GM12878 (cell line): ENCODE measurements at regions of chr16 and their contacts with region 1.

Region 1: GRCh38 chr16:68590201-68590994 is 51.3 kb downstream of the ZFP90 start:
- DNase-seq: no peak
- ATAC-seq: peak; percentile 90
- H3K4me3 ChIP-seq: no peak overlapping the region
- H3K27ac ChIP-seq: no peak overlapping the region
- H3K4me1 ChIP-seq: no peaks in the 10 kb centered on the region
- H3K27me3 ChIP-seq: no peaks in the 10 kb centered on the region
- CTCF ChIP-seq: peak; percentile 34 to 71 (median 65); a peak in 5 of 6 replicates
- EP300 ChIP-seq: no peak
- POLR2A ChIP-seq: no peak
- RAD21 ChIP-seq: peak; percentile 72

Region 2: GRCh38 chr16:68520649-68521086 is 69.7 kb before region 1 on chr16:
- CTCF ChIA-PET with region 1: interaction called, 11 read pairs
- POLR2A ChIA-PET with region 1: no interaction called
- RAD21 ChIA-PET with region 1: interaction called, 4 read pairs
- SMC1A ChIA-PET with region 1: no interaction called
- in situ Hi-C with region 1: no loop called
- intact Hi-C with region 1: no loop called
- DNase-seq: no peak
- ATAC-seq: peak; percentile 98
- H3K4me3 ChIP-seq: no peak overlapping the region
- H3K27ac ChIP-seq: no peak overlapping the region
- H3K4me1 ChIP-seq: no peaks in the 10 kb centered on the region; the same call in 1 of the 2 replicates
- H3K27me3 ChIP-seq: no peaks in the 10 kb centered on the region; a peak in 1 of 4 replicates
- CTCF ChIP-seq: peak; percentile 99 to 100 (median 100); a peak in 5 of 6 replicates
- EP300 ChIP-seq: peak in 1 of 2 experiments; percentile 25; a peak in 1 of 4 replicates
- POLR2A ChIP-seq: no peak
- RAD21 ChIP-seq: peak; percentile 55

Region 3: GRCh38 chr16:68575082-68575481 is 15.3 kb before region 1 on chr16:
- CTCF ChIA-PET with region 1: no interaction called
- POLR2A ChIA-PET with region 1: no interaction called
- RAD21 ChIA-PET with region 1: no interaction called
- SMC1A ChIA-PET with region 1: no interaction called
- in situ Hi-C with region 1: no loop called
- intact Hi-C with region 1: no loop called
- DNase-seq: no peak
- ATAC-seq: no peak
- H3K4me3 ChIP-seq: no peak overlapping the region
- H3K27ac ChIP-seq: no peak overlapping the region
- H3K4me1 ChIP-seq: no peaks in the 10 kb centered on the region
- H3K27me3 ChIP-seq: no peaks in the 10 kb centered on the region
- CTCF ChIP-seq: no peak
- EP300 ChIP-seq: no peak
- POLR2A ChIP-seq: no peak
- RAD21 ChIP-seq: no peak